Calu3 (cell line): ENCODE measurements at regions of chrX and their contacts with region 1.

Region 1: DNA sequence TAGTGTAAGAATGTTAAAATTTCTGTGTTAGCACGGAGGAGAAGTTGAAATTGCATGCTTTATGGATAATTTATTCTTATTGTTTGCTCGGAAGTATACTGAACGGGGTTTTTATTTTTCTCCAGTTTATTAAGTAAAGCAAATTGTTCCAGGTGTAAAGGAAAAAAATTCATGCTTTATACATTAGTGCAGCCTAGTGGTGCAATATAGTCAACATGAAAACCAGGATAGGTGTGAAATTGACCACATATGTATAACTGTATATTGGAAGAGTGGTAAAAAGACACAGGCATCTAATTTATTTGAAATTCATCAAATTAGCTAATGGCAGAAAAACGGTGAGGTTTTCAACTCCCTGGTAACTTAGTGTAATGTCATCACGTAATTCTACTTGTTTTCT is 959 bp downstream of the BRS3 start:
- DNase-seq: no peak
- H3K4me3 Mint-ChIP-seq: no peak overlapping the region
- H3K27ac Mint-ChIP-seq: no peak overlapping the region
- H3K4me1 Mint-ChIP-seq: no peaks in the 10 kb centered on the region
- H3K27me3 Mint-ChIP-seq: peaks cover 73% of the 10 kb centered on the region
- CTCF ChIP-seq: no peak

Region 2: GRCh38 chrX:136386826-136387225 is 101.9 kb before region 1 on chrX:
- CTCF ChIA-PET with region 1: no interaction called
- intact Hi-C with region 1: no loop called
- DNase-seq: no peak
- H3K4me3 Mint-ChIP-seq: no peak overlapping the region
- H3K27ac Mint-ChIP-seq: no peak overlapping the region
- H3K4me1 Mint-ChIP-seq: no peaks in the 10 kb centered on the region
- H3K27me3 Mint-ChIP-seq: peaks cover 20% of the 10 kb centered on the region
- CTCF ChIP-seq: no peak

Region 3: DNA sequence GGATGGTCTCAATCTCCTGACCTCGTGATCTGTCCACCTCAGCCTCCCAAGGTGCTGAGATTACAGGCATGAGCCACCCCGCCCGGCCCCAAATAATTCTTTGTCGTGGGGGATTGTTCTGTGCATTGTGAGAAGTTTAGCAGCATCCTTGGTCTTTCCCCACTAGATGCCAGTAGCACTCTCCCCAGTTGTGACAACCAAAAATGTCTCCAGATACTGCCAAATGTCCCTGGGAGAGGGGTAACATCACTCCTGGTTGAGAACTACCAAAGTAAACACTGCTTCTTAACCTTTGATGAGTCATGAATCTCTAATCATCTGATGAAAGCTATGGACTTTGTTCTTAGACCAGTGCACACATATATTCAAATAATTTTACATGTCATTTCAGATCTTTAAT is 91.7 kb before region 1 on chrX:
- CTCF ChIA-PET with region 1: no interaction called
- intact Hi-C with region 1: loop called (anchors 5 kb)
- DNase-seq: peak; percentile 6
- H3K4me3 Mint-ChIP-seq: no peak overlapping the region
- H3K27ac Mint-ChIP-seq: no peak overlapping the region
- H3K4me1 Mint-ChIP-seq: no peaks in the 10 kb centered on the region
- H3K27me3 Mint-ChIP-seq: no peaks in the 10 kb centered on the region
- CTCF ChIP-seq: no peak